ENCODE measurements at regions of chr6 and their contacts with region 1.

Region 1: GRCh38 chr6:498795-499231 is 107.3 kb downstream of the IRF4 start:
- DNase-seq: peak; percentile 81
- ATAC-seq: peak; percentile 64
- H3K4me3 Mint-ChIP-seq: peak overlapping the region; percentile 63
- H3K27ac Mint-ChIP-seq: peak overlapping the region; percentile 93
- H3K4me1 Mint-ChIP-seq: peaks cover 87% of the 10 kb centered on the region
- H3K27me3 Mint-ChIP-seq: no peaks in the 10 kb centered on the region

Region 2: DNA sequence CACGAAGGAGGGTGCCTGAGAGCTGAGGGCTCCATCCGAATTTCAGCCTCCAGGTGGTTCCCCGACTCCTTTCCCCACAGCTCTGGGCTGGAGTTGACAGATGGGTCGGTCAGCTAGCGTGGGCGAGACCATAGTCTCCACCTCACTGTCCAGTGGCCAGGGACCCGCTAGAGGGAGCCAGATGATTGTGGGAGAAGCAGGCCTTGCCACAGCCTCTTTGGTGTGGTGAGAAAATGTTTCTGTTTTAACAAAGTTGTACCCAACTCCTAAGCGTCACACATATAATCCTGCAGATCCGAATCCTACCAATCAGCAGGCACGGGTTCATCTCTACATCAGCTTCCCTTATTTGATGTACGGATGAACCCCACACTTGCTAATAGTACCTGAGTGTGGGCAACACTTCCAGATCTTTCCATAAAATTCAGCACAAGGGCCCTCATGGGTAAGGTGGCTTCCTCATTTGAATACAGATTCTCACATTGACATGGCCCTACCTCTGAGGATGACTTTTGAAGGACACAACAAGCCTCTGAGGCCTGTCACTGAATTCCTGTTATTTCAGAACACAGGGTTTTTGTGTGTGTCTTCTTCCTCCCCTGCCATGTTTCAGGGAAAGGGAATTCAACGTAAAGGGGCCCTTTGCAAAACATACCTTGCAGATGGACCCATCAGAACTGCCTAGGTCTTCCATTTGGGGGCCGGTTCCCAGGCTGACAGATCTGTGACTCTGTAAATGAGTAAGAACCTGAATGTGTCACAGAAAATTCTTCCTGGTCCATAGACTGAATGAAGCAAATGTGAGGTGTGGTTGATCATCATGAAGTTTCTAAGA is 309.8 kb before region 1 on chr6:
- CTCF ChIA-PET with region 1: no interaction called
- POLR2A ChIA-PET with region 1: no interaction called
- intact Hi-C with region 1: loop called (anchors 2 kb)
- DNase-seq: peak; percentile 92
- ATAC-seq: peak; percentile 78
- H3K4me3 Mint-ChIP-seq: no peak overlapping the region
- H3K27ac Mint-ChIP-seq: peak overlapping the region; percentile 95
- H3K4me1 Mint-ChIP-seq: peaks cover 52% of the 10 kb centered on the region
- H3K27me3 Mint-ChIP-seq: peaks cover 3% of the 10 kb centered on the region

Region 3: DNA sequence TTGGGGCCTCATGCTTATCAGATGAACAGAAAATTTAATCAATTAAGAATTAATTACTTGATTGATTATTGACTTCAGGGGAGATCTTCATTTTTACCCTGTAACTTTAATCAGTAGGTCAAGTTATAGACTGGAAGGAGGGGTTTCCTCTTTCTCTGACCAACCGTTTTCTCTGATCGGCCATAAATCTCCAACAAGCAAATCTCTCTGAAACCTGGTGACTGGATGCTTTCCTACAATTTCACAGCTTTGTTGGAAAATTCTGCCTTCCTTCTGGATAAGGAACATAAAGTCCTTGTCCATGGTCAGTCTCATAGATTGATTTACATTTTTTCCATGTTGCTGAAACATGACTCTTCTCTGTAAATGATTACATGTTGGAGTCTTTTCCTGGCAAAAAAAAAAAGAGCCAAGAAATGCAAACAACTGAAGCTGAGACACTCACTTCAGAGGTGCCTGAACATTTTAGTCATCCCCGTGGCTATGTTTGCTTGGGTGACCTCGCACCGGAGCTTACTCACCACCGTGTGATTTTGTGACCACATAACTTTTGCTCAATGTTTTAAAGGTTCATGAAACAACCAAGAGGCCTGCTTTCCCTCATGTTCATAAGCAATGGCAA is 76.3 kb before region 1 on chr6:
- CTCF ChIA-PET with region 1: interaction called, 5 read pairs
- POLR2A ChIA-PET with region 1: interaction called, 3 read pairs
- intact Hi-C with region 1: loop called in 1 of 2 experiments (anchors 2 kb)
- DNase-seq: peak; percentile 87
- ATAC-seq: peak; percentile 99
- H3K4me3 Mint-ChIP-seq: no peak overlapping the region
- H3K27ac Mint-ChIP-seq: peak overlapping the region; percentile 63
- H3K4me1 Mint-ChIP-seq: peaks cover 31% of the 10 kb centered on the region
- H3K27me3 Mint-ChIP-seq: no peaks in the 10 kb centered on the region

Region 4: DNA sequence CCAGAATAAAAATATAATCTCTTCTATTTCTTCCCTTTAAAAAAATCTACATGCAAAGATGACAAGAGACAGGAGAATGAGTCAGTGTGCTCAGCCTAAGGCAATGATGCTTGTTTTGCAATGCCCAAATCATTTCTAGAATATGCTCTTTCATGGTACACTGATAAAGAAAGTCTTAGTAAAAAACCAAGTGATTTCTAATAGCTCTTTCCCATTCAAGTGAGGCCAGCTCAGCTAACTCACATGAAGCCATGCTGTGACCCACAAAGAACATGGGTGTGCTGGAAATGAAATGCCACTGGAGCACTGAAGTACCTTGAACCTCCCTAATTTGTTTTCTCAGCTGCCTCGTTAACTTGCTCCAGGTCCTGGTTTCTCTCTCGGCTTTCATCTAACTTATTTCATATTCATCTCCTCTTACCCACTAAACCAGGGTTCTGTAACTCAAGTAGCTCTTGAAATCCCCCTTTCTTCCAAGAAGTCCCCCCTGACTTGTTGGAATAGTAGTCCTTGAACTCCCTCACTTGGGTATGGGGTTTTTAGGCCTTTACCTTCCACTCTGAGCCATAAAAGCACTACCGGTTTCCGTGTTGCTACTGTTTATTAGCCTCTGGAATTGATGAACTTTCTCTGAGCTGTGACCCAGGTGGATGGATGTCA is 14.6 kb before region 1 on chr6:
- CTCF ChIA-PET with region 1: interaction called, 11 read pairs
- POLR2A ChIA-PET with region 1: interaction called, 21 read pairs
- intact Hi-C with region 1: loop called in 1 of 2 experiments (anchors 2 kb)
- DNase-seq: peak; percentile 73
- ATAC-seq: peak; percentile 92
- H3K4me3 Mint-ChIP-seq: peak overlapping the region; percentile 58
- H3K27ac Mint-ChIP-seq: peak overlapping the region; percentile 100
- H3K4me1 Mint-ChIP-seq: peaks cover 88% of the 10 kb centered on the region
- H3K27me3 Mint-ChIP-seq: no peaks in the 10 kb centered on the region

Region 5: GRCh38 chr6:558089-558488 is 59.3 kb after region 1 on chr6:
- CTCF ChIA-PET with region 1: interaction called, 3 read pairs
- POLR2A ChIA-PET with region 1: interaction called, 11 read pairs
- intact Hi-C with region 1: loop called in 1 of 2 experiments (anchors 5 kb)
- DNase-seq: no peak
- ATAC-seq: no peak
- H3K4me3 Mint-ChIP-seq: peak overlapping the region; percentile 15
- H3K27ac Mint-ChIP-seq: peak overlapping the region; percentile 90
- H3K4me1 Mint-ChIP-seq: peaks cover 63% of the 10 kb centered on the region
- H3K27me3 Mint-ChIP-seq: no peaks in the 10 kb centered on the region